AG04450 (cell line): ENCODE measurements at regions of chr11 and their contacts with region 1.

Region 1: GRCh38 chr11:31958076-31958735 is 132.7 kb upstream of the RCN1 start:
- DNase-seq: no peak
- H3K4me3 ChIP-seq: no peak overlapping the region
- H3K27ac ChIP-seq: no peak overlapping the region
- H3K27me3 ChIP-seq: no peaks in the 10 kb centered on the region
- CTCF ChIP-seq: peak; percentile 85

Region 2: DNA sequence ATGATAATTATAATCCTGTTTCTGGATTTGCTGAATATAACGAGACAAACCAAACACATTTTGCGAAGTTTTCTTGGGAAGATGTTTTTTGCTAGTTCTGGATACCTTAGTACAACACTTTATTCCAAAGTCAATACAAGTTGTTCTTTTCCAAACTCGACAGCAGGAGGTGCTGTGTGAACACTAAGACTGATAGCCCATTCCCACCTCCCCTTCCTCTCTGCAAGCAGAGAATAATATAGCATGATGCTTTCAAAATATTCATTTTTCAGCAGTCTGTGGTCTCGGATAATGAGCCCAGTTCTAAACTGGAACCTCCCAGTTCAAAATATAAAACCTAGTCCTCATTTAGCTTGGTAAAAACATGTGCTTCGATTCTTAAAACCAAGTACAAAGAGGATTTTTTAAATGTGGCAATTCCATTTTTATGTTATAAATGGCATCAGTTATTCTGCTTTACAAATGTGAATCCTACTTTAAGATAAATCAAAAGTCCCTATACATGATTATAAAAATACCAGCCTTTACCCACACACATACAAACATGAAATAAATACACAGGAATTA is 717.8 kb before region 1 on chr11:
- CTCF ChIA-PET with region 1: interaction called, 14 read pairs
- POLR2A ChIA-PET with region 1: no interaction called
- DNase-seq: peak; percentile 1
- H3K4me3 ChIP-seq: no peak overlapping the region
- H3K27ac ChIP-seq: no peak overlapping the region
- H3K27me3 ChIP-seq: no peaks in the 10 kb centered on the region
- CTCF ChIP-seq: peak; percentile 58

Region 3: GRCh38 chr11:31397239-31397834 is 560.9 kb before region 1 on chr11:
- CTCF ChIA-PET with region 1: interaction called, 20 read pairs
- POLR2A ChIA-PET with region 1: no interaction called
- DNase-seq: no peak
- H3K4me3 ChIP-seq: no peak overlapping the region
- H3K27ac ChIP-seq: no peak overlapping the region
- H3K27me3 ChIP-seq: no peaks in the 10 kb centered on the region
- CTCF ChIP-seq: peak; percentile 67

Region 4: GRCh38 chr11:31641477-31642062 is 316.6 kb before region 1 on chr11:
- CTCF ChIA-PET with region 1: interaction called, 12 read pairs
- POLR2A ChIA-PET with region 1: no interaction called
- DNase-seq: no peak
- H3K4me3 ChIP-seq: no peak overlapping the region
- H3K27ac ChIP-seq: no peak overlapping the region
- H3K27me3 ChIP-seq: no peaks in the 10 kb centered on the region
- CTCF ChIP-seq: peak; percentile 72

Region 5: DNA sequence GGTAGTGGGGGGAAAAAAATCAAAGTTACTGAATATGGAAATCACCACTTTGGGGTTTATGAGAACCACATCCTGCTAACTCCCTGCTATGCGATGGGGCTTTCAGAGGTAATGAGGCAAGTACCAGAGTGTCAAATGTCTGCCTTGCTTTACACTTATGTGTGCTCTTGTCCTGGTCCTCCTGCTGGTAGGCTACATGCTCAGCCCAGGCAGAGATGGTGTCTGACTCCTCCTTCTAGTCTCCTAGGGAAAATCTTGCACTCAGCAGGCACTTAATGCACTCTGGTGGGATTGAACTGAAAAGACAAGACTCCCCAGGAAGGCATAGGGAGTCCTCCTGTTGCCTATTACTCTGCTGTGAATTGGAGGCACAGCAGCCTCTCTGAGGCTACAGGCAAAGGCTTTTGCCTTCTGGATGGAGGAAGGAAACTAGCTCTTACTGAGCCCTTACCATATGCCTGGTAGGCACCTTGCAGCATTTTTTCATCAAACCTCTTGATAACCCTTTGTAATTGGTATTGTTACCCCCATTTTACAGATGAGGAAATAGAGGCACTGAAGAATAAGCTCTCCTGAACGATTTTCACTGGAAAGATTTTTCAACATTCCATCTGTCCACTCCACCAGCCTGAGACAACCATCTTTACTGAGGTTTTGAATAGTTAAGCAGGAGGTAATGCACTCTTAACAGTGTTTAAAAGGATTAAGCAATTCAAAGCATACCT is 15.0 kb before region 1 on chr11:
- CTCF ChIA-PET with region 1: interaction called, 12 read pairs
- POLR2A ChIA-PET with region 1: no interaction called
- DNase-seq: no peak
- H3K4me3 ChIP-seq: no peak overlapping the region
- H3K27ac ChIP-seq: no peak overlapping the region
- H3K27me3 ChIP-seq: peaks cover 14% of the 10 kb centered on the region
- CTCF ChIP-seq: no peak

Region 6: DNA sequence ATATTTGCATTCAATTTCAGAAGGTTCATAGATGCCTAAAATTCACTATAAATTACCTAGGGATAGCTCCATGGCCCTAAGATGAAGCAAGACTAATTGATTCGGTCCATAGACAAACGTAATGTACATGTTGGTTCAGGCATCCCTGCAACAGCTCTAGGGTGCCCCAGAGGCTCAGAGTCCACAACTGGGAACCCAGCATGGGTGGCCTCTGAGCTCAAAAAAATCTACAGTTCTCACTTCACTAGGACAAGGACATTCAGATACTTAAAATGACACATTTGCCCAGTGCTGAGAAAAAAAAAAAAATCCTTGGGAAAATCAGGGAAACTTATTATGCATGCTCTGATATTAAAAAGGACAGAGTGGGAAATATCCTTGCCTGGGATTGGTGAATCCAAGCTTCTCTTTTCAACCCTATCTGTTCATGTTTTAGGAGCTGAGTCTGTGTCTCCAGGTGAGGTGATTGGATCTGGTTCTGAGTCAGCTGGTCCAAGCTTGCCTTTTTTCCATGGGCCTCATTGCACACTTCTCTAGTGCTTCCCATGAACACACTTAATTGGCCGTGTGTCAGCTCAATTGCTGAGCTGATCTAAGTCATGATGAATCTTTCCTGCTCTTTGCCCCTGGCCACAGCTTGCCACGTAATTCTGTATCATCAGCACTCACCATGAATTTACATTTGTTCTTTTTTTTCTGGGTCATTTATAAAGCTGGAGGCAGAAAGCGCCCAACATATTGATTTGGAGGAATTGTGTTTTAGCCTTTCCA is 16.3 kb after region 1 on chr11:
- CTCF ChIA-PET with region 1: interaction called, 34 read pairs
- POLR2A ChIA-PET with region 1: no interaction called
- DNase-seq: no peak
- H3K4me3 ChIP-seq: no peak overlapping the region
- H3K27ac ChIP-seq: no peak overlapping the region
- H3K27me3 ChIP-seq: peaks cover 12% of the 10 kb centered on the region
- CTCF ChIP-seq: no peak

Region 7: DNA sequence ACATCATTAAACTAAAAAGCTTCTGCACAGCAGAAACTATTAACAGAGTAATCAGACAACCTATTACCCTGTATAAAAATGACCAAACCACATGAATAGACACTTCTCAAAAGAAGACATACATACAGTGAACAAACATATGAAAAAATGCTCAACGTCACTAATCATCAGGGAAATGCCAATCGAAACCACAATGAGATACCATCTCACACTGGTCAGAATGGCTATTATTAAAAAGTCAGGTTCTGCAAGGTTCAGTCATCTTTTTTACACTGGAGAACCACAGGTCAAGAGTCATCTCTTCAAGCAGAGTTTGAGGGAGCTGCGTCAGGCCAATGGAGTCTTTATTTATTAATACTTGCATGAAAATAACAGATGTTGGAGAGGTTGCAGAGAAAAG is 173.1 kb after region 1 on chr11:
- CTCF ChIA-PET with region 1: no interaction called
- POLR2A ChIA-PET with region 1: no interaction called
- DNase-seq: no peak
- H3K4me3 ChIP-seq: no peak overlapping the region
- H3K27ac ChIP-seq: no peak overlapping the region
- H3K27me3 ChIP-seq: no peaks in the 10 kb centered on the region
- CTCF ChIP-seq: no peak